ENCODE measurements at regions of chr2 and their contacts with region 1.

Region 1: GRCh38 chr2:190534310-190535120 is at the start of gene NEMP2:
- DNase-seq: peak; percentile 87
- ATAC-seq: peak; percentile 70
- H3K4me3 Mint-ChIP-seq: peak within 1 kb of the TSS; percentile 95
- H3K27ac Mint-ChIP-seq: peak within 1 kb of the TSS; percentile 98
- H3K4me1 Mint-ChIP-seq: peaks cover 52% of the 10 kb centered on the region
- H3K27me3 Mint-ChIP-seq: no peaks in the 10 kb centered on the region
- total RNA-seq, gene NEMP2: 24.6 to 25.1 TPM

Region 2: GRCh38 chr2:189569295-189569910 is 965.1 kb before region 1 on chr2:
- CTCF ChIA-PET with region 1: no interaction called
- POLR2A ChIA-PET with region 1: no interaction called
- intact Hi-C with region 1: no loop called
- DNase-seq: no peak
- ATAC-seq: peak; percentile 53
- H3K4me3 Mint-ChIP-seq: no peak overlapping the region
- H3K27ac Mint-ChIP-seq: peak overlapping the region; percentile 80
- H3K4me1 Mint-ChIP-seq: peaks cover 31% of the 10 kb centered on the region
- H3K27me3 Mint-ChIP-seq: no peaks in the 10 kb centered on the region

Region 3: DNA sequence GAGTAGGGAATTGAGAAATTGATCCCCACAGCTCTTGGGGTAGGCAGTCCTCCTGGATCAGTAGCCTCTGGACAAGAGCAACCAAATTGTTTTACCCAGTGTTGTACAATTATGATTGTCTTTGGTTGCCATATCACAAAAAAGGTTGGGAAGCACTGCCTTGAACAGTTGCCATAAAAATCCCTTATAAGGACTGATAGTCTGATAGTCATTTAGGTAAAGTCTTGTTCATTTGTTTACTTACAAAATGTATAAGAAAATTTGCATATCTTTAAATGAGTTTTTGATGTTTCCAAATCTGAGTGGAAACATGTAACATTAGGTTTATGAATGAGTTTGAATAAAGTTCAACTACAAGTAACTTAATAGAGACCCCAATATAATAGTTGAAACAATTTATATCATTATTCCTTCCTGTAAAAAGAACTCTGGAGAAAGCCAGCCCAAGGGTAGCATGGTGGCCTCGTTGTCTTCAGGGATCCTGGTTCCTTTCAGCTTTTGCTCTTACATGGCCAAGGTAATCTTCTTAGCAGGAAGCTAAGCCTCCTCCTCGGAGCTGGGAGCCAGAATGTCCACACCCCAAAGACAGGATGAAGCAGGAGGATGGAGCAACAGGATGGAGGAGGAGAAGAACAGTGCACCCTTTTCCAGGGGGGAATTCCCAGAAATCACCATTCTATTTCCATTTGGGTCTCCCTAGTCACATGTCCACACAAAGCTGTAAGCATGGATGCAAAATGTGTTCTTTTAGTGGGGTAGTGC is 35.7 kb after region 1 on chr2:
- CTCF ChIA-PET with region 1: interaction called, 3 read pairs
- POLR2A ChIA-PET with region 1: no interaction called
- intact Hi-C with region 1: loop called in 1 of 2 experiments (anchors 2 kb)
- DNase-seq: no peak
- ATAC-seq: peak; percentile 44
- H3K4me3 Mint-ChIP-seq: no peak overlapping the region
- H3K27ac Mint-ChIP-seq: no peak overlapping the region
- H3K4me1 Mint-ChIP-seq: peaks cover 24% of the 10 kb centered on the region
- H3K27me3 Mint-ChIP-seq: no peaks in the 10 kb centered on the region